Activated naive CD4-positive, alpha-beta T cell treated with anti-CD3 and anti-CD28 coated beads for 36 hours (primary cell): ENCODE measurements at regions of chr2 and their contacts with region 1.

Region 1: DNA sequence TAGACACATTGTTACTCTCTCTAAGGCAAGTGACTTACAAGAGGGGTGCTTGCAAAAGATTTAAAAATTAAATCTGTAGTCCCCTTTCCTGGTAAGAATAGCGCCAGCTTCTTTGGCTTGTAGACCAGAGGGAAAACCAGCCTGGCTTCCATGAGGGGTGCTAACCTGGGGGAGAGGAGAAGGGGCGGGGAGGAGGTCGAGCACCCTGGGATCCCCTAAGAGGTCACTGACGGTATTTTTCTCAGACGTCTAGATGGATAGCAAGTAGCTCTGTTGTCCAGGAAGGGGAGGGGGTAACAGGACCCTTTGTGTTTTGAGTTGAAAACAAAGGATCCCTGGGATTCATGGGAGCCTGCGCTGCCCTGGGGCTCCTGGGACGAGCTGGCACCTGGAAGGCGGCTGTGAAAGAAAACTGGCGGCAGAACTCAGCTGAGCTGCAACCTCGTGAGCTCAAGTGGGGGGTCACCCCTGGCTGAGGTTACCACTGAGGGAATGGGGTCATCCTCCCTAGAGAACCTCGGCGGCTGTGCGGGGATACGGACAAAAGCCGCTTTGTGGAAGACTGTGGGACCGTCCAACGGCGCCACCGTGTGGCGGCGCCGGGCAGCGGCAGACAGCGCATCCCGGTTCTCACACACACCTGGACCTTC is 37.8 kb upstream of the MRPL19 start:
- DNase-seq: peak; percentile 62
- H3K4me3 Mint-ChIP-seq: no peak overlapping the region
- H3K27ac Mint-ChIP-seq: no peak overlapping the region
- H3K4me1 Mint-ChIP-seq: no peaks in the 10 kb centered on the region
- H3K27me3 Mint-ChIP-seq: peaks cover 55% of the 10 kb centered on the region

Region 2: GRCh38 chr2:75064691-75065396 is 544.0 kb before region 1 on chr2:
- CTCF ChIA-PET with region 1: interaction called, 7 read pairs
- intact Hi-C with region 1: loop called (anchors 5 kb)
- DNase-seq: peak; percentile 61
- H3K4me3 Mint-ChIP-seq: no peak overlapping the region
- H3K27ac Mint-ChIP-seq: no peak overlapping the region
- H3K4me1 Mint-ChIP-seq: no peaks in the 10 kb centered on the region
- H3K27me3 Mint-ChIP-seq: no peaks in the 10 kb centered on the region

Region 3: GRCh38 chr2:75466708-75467311 is 142.0 kb before region 1 on chr2:
- CTCF ChIA-PET with region 1: interaction called, 44 read pairs
- intact Hi-C with region 1: loop called (anchors 1 kb)
- DNase-seq: peak; percentile 38
- H3K4me3 Mint-ChIP-seq: no peak overlapping the region
- H3K27ac Mint-ChIP-seq: no peak overlapping the region
- H3K4me1 Mint-ChIP-seq: no peaks in the 10 kb centered on the region
- H3K27me3 Mint-ChIP-seq: peaks cover 24% of the 10 kb centered on the region

Region 4: DNA sequence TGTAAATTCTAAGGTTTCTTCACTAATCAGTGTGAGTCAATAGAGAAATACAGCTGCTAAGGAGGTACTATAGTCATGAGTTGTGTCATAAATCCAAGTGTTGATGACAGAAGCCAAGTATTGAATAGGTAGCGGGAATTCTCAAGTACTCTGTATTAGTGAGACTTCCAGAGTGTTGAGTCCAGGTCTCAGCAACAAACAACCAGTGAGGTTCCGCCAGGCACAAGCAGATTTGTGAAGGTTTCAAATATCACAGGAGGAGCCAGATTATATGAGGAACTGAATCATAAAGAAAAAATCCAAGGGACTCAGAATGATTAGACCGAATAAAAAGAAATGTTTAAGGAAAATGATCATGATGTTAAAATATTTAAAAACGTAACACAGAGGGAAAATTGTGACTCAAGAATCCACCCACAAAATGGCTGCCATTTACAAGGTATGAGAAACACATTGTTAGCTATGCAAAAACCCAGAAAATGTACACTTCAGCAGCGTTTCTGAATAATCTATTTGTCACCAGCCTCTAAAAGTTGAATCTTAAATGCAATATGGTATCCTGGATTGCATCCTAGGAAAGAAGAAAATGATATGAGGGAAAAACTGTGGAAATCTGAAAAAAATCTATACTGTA is 20.7 kb before region 1 on chr2:
- CTCF ChIA-PET with region 1: interaction called, 10 read pairs
- intact Hi-C with region 1: no loop called
- DNase-seq: no peak
- H3K4me3 Mint-ChIP-seq: no peak overlapping the region
- H3K27ac Mint-ChIP-seq: no peak overlapping the region
- H3K4me1 Mint-ChIP-seq: peaks cover 4% of the 10 kb centered on the region
- H3K27me3 Mint-ChIP-seq: peaks cover 2% of the 10 kb centered on the region

Region 5: GRCh38 chr2:77046339-77046738 is 1437.5 kb after region 1 on chr2:
- CTCF ChIA-PET with region 1: no interaction called
- intact Hi-C with region 1: no loop called
- DNase-seq: no peak
- H3K4me3 Mint-ChIP-seq: no peak overlapping the region
- H3K27ac Mint-ChIP-seq: no peak overlapping the region
- H3K4me1 Mint-ChIP-seq: no peaks in the 10 kb centered on the region
- H3K27me3 Mint-ChIP-seq: no peaks in the 10 kb centered on the region